ENCODE measurements at regions of chr4 and their contacts with region 1.

Region 1: GRCh38 chr4:38062088-38062893 is 102.1 kb downstream of the PTTG2 start:
- DNase-seq: peak; percentile 57 to 73 (median 70)
- H3K4me3 ChIP-seq: peak overlapping the region; percentile 6 to 59 (median 33)
- H3K4me3 Mint-ChIP-seq: peak overlapping the region; percentile 78 to 89
- H3K27ac ChIP-seq: peak overlapping the region in 1 of 2 donors; percentile 32
- H3K27ac Mint-ChIP-seq: peak overlapping the region in 6 of 7 donors; percentile 0 to 91 (median 86)
- H3K4me1 ChIP-seq: peaks cover 5 to 7% of the 10 kb centered on the region in 2 donors
- H3K4me1 Mint-ChIP-seq: peaks cover 11% of the 10 kb centered on the region
- H3K27me3 ChIP-seq: no peaks in the 10 kb centered on the region
- H3K27me3 Mint-ChIP-seq: no peaks in the 10 kb centered on the region
- CTCF ChIP-seq: peak; percentile 90

Region 2: DNA sequence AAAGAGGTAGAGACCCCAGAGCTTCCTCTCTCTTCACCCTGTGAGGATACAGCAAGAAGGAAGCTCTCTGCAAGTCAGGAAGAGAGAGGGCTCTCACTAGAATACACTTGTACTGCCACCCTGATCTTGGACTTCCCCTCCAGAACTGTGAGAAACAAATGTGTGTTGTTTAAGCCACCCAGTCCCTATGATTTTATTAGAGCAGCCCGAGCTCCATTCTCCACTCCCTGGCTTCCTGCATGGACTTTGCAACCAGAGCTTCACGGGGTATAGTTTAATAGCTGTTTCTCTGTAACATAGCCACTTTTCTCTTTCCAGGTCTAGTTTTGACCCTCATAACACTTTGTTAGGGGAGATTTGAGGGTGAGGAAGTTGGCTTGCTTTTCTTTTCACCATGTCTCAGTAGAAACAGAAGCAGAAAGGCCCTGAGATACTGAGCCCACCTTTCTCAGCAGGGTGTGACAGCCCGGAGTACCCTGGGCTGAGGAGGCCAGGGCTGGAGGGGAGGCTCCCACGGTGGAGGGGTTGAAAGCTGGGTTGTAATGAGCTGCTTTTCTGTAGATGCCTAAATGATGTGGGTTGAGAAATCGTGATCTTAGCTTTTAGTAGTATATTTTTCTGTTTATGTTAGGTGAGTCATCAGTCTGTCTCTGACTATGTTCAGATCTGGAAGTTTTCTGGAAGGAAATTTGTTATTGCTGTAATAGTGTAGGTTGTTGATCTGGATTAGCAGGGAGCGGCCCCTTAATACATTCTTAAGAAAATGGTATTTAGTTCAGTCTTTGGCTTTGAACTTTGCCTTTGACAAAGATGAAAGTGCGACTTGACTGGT is 16.5 kb after region 1 on chr4:
- intact Hi-C with region 1: loop called in 1 of 2 experiments (anchors 2 kb)
- DNase-seq: peak; percentile 55 to 87 (median 82)
- H3K4me3 ChIP-seq: peak overlapping the region in 2 of 3 experiments; percentile 17 to 56
- H3K4me3 Mint-ChIP-seq: peak overlapping the region; percentile 60 to 65
- H3K27ac ChIP-seq: peak overlapping the region; percentile 98 to 99
- H3K27ac Mint-ChIP-seq: peak overlapping the region; percentile 94 to 99 (median 98)
- H3K4me1 ChIP-seq: peaks cover 96 to 99% of the 10 kb centered on the region in 2 donors
- H3K4me1 Mint-ChIP-seq: peaks cover 87% of the 10 kb centered on the region
- H3K27me3 ChIP-seq: no peaks in the 10 kb centered on the region
- H3K27me3 Mint-ChIP-seq: peaks cover 0 to 2% (median 0%) of the 10 kb centered on the region in 3 donors
- CTCF ChIP-seq: no peak

Region 3: GRCh38 chr4:38179690-38180377 is 117.5 kb after region 1 on chr4:
- intact Hi-C with region 1: loop called in 1 of 2 experiments (anchors 5 kb)
- DNase-seq: peak; percentile 61 to 74 (median 65)
- H3K4me3 ChIP-seq: no peak overlapping the region
- H3K4me3 Mint-ChIP-seq: no peak overlapping the region
- H3K27ac ChIP-seq: no peak overlapping the region
- H3K27ac Mint-ChIP-seq: peak overlapping the region in 2 of 7 donors; percentile 24 to 56
- H3K4me1 ChIP-seq: peaks cover 33% of the 10 kb centered on the region in 2 donors
- H3K4me1 Mint-ChIP-seq: peaks cover 34% of the 10 kb centered on the region
- H3K27me3 ChIP-seq: no peaks in the 10 kb centered on the region
- H3K27me3 Mint-ChIP-seq: peaks cover 0 to 2% (median 2%) of the 10 kb centered on the region in 3 donors
- CTCF ChIP-seq: peak; percentile 96

Region 4: DNA sequence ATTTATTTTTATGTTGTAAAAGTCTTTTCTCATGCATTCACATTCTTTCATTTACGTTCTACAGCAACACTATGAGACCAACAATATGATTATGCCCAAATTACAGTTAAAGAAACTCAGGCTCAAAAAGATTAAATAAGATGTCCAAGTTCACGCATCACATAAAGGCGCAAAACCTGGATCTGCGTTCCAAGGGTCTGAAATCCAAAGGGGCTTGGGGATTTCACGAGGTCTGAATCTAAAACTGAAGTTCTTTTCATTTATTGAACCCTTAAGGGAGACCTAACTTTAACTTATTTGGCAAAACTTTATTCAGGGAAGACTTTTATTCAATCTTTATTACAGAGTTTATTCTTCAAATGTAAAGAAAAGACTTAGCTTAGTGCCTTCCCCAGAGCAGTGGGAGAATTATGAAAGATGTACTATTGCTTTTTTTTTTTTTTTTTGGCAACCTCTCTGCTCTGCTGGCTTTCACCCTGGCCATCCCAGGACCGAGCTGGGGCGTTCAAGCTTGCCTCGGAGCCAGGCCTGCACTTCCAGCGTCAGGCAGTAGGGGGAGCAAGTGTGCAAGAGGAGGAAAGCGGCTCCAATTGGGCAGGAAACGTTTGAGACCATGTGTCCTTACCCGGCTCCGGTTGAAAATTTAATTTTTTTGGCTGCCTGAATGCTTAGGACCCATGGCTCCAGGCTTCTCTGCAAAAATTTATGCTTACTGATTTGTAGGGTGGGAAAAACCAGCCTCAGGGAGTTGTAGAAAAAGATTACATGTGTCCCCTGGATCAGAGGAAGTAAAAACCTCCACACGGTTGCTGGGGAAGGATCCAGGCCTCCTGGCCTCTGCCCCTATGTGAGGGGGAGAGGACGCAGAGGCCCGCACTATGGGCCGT is 257.4 kb after region 1 on chr4:
- intact Hi-C with region 1: loop called in 1 of 2 experiments (anchors 10 kb)
- DNase-seq: peak; percentile 76 to 83 (median 77)
- H3K4me3 ChIP-seq: peak overlapping the region in 1 of 3 experiments; percentile 74
- H3K4me3 Mint-ChIP-seq: peak overlapping the region; percentile 68 to 84
- H3K27ac ChIP-seq: peak overlapping the region; percentile 79 to 87
- H3K27ac Mint-ChIP-seq: peak overlapping the region; percentile 87 to 95 (median 91)
- H3K4me1 ChIP-seq: peaks cover 44 to 59% of the 10 kb centered on the region in 2 donors
- H3K4me1 Mint-ChIP-seq: peaks cover 48% of the 10 kb centered on the region
- H3K27me3 ChIP-seq: no peaks in the 10 kb centered on the region
- H3K27me3 Mint-ChIP-seq: peaks cover 0 to 2% (median 0%) of the 10 kb centered on the region in 3 donors
- CTCF ChIP-seq: peak; percentile 99

Region 5: GRCh38 chr4:38675146-38676121 is 613.1 kb after region 1 on chr4:
- intact Hi-C with region 1: loop called (anchors 1 to 10 kb)
- DNase-seq: peak; percentile 67 to 79 (median 75)
- H3K4me3 ChIP-seq: peak overlapping the region in 1 of 3 experiments; percentile 29
- H3K4me3 Mint-ChIP-seq: peak overlapping the region in 1 of 2 donors; percentile 58
- H3K27ac ChIP-seq: peak overlapping the region in 1 of 2 donors; percentile 62
- H3K27ac Mint-ChIP-seq: peak overlapping the region in 6 of 7 donors; percentile 56 to 88 (median 69)
- H3K4me1 ChIP-seq: peaks cover 55 to 68% of the 10 kb centered on the region in 2 donors
- H3K4me1 Mint-ChIP-seq: peaks cover 68% of the 10 kb centered on the region
- H3K27me3 ChIP-seq: no peaks in the 10 kb centered on the region
- H3K27me3 Mint-ChIP-seq: no peaks in the 10 kb centered on the region
- CTCF ChIP-seq: peak; percentile 94

Region 6: GRCh38 chr4:38730830-38731646 is 668.7 kb after region 1 on chr4:
- intact Hi-C with region 1: loop called (anchors 2 to 5 kb)
- DNase-seq: peak; percentile 62 to 75 (median 67)
- H3K4me3 ChIP-seq: no peak overlapping the region
- H3K4me3 Mint-ChIP-seq: no peak overlapping the region
- H3K27ac ChIP-seq: no peak overlapping the region
- H3K27ac Mint-ChIP-seq: no peak overlapping the region
- H3K4me1 ChIP-seq: peaks cover 14 to 29% of the 10 kb centered on the region in 2 donors
- H3K4me1 Mint-ChIP-seq: peaks cover 20% of the 10 kb centered on the region
- H3K27me3 ChIP-seq: no peaks in the 10 kb centered on the region
- H3K27me3 Mint-ChIP-seq: peaks cover 0 to 4% (median 2%) of the 10 kb centered on the region in 3 donors
- CTCF ChIP-seq: peak; percentile 99